ENCODE measurements at regions of chr12 and their contacts with region 1.

Region 1: DNA sequence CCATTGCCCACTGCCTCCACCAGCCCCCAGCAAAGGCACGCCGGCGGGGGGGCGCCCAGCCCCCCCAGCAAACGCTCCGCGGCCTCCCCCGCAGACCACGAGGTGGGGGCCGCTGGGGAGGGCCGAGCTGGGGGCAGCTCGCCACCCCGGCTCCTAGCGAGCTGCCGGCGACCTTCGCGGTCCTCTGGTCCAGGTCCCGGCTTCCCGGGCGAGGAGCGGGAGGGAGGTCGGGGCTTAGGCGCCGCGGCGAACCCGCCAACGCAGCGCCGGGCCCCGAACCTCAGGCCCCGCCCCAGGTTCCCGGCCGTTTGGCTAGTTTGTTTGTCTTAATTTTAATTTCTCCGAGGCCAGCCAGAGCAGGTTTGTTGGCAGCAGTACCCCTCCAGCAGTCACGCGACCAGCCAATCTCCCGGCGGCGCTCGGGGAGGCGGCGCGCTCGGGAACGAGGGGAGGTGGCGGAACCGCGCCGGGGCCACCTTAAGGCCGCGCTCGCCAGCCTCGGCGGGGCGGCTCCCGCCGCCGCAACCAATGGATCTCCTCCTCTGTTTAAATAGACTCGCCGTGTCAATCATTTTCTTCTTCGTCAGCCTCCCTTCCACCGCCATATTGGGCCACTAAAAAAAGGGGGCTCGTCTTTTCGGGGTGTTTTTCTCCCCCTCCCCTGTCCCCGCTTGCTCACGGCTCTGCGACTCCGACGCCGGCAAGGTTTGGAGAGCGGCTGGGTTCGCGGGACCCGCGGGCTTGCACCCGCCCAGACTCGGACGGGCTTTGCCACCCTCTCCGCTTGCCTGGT is at the start of gene CDKN1B:
- DNase-seq: peak; percentile 92
- ATAC-seq: peak; percentile 71
- H3K4me3 Mint-ChIP-seq: peak within 1 kb of the TSS; percentile 99
- H3K27ac Mint-ChIP-seq: peak within 1 kb of the TSS; percentile 98
- H3K4me1 Mint-ChIP-seq: peaks cover 25% of the 10 kb centered on the region
- H3K27me3 Mint-ChIP-seq: no peaks in the 10 kb centered on the region
- total RNA-seq, gene CDKN1B: 90.5 to 96.7 TPM

Region 2: DNA sequence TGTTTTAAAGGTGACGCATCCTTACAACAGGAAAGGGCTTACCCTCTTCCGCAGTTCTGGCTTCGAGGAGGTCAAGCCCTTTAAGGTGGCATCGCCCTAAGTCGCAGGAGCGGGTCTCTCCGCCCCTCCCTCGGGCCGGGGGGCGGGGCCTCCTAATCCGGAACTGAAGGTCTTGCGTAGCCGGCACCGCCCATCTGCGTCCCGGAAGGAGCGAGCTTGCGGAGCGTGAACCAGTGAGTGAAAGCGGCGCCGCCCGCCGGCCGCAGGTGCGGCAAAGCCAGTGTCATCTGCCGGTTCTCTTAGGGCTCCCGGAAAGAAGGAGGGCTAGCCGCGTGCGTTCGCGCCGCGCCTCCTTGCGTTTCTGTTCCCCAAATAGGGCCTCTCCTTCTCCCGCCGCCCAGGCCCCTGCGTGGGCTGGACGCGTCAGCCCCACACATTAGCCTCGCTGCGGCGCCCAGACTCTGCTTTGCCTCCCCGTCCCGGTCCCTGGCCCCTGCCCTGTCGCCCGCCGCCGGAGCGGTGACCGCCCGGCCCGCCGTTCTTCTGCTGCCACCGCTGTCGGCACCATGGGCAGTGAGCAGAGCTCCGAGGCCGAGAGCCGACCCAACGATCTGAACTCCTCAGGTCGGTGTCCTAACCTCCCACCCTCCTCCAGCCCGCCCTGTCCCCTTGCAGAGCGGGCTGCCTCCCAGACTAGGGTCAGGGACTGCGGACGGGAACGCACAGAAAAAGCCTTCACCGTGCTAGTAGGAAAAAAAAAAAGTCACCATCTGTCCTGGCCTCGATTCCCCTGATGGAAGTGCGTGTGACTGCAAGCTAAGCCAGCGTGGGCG is 359.9 kb before region 1 on chr12 and contains the start of gene BORCS5:
- CTCF ChIA-PET with region 1: interaction called, 10 read pairs
- POLR2A ChIA-PET with region 1: interaction called, 70 read pairs
- DNase-seq: peak; percentile 99
- ATAC-seq: peak; percentile 94
- H3K4me3 Mint-ChIP-seq: peak within 1 kb of the TSS; percentile 88
- H3K27ac Mint-ChIP-seq: peak within 1 kb of the TSS; percentile 94
- H3K4me1 Mint-ChIP-seq: peaks cover 48% of the 10 kb centered on the region
- H3K27me3 Mint-ChIP-seq: no peaks in the 10 kb centered on the region
- total RNA-seq, gene BORCS5: 18.8 to 21.2 TPM

Region 3: GRCh38 chr12:12562585-12563261 is 154.3 kb before region 1 on chr12 and contains the start of gene DUSP16:
- CTCF ChIA-PET with region 1: interaction called, 3 read pairs
- POLR2A ChIA-PET with region 1: interaction called, 20 read pairs
- DNase-seq: peak; percentile 88
- ATAC-seq: peak; percentile 88
- H3K4me3 Mint-ChIP-seq: peak within 1 kb of the TSS; percentile 83
- H3K27ac Mint-ChIP-seq: peak within 1 kb of the TSS; percentile 91
- H3K4me1 Mint-ChIP-seq: peaks cover 35% of the 10 kb centered on the region
- H3K27me3 Mint-ChIP-seq: peaks cover 5% of the 10 kb centered on the region
- total RNA-seq, gene DUSP16: 17.4 to 19.0 TPM

Region 4: GRCh38 chr12:12645485-12645884 is 71.5 kb before region 1 on chr12:
- CTCF ChIA-PET with region 1: interaction called, 4 read pairs
- POLR2A ChIA-PET with region 1: interaction called, 11 read pairs
- DNase-seq: peak; percentile 46
- ATAC-seq: peak; percentile 83
- H3K4me3 Mint-ChIP-seq: no peak overlapping the region
- H3K27ac Mint-ChIP-seq: no peak overlapping the region
- H3K4me1 Mint-ChIP-seq: peaks cover 6% of the 10 kb centered on the region
- H3K27me3 Mint-ChIP-seq: no peaks in the 10 kb centered on the region

Region 5: GRCh38 chr12:12696562-12697383 is 20.2 kb before region 1 on chr12:
- CTCF ChIA-PET with region 1: interaction called, 23 read pairs
- POLR2A ChIA-PET with region 1: interaction called, 258 read pairs
- DNase-seq: peak; percentile 94
- ATAC-seq: peak; percentile 86
- H3K4me3 Mint-ChIP-seq: peak overlapping the region; percentile 91
- H3K27ac Mint-ChIP-seq: peak overlapping the region; percentile 98
- H3K4me1 Mint-ChIP-seq: peaks cover 43% of the 10 kb centered on the region
- H3K27me3 Mint-ChIP-seq: no peaks in the 10 kb centered on the region

Region 6: GRCh38 chr12:12704593-12705230 is 12.3 kb before region 1 on chr12:
- CTCF ChIA-PET with region 1: interaction called, 13 read pairs
- POLR2A ChIA-PET with region 1: interaction called, 22 read pairs
- DNase-seq: no peak
- ATAC-seq: peak; percentile 54
- H3K4me3 Mint-ChIP-seq: no peak overlapping the region
- H3K27ac Mint-ChIP-seq: no peak overlapping the region
- H3K4me1 Mint-ChIP-seq: peaks cover 21% of the 10 kb centered on the region
- H3K27me3 Mint-ChIP-seq: no peaks in the 10 kb centered on the region